ENCODE measurements at regions of chr5 and their contacts with region 1.

Region 1: DNA sequence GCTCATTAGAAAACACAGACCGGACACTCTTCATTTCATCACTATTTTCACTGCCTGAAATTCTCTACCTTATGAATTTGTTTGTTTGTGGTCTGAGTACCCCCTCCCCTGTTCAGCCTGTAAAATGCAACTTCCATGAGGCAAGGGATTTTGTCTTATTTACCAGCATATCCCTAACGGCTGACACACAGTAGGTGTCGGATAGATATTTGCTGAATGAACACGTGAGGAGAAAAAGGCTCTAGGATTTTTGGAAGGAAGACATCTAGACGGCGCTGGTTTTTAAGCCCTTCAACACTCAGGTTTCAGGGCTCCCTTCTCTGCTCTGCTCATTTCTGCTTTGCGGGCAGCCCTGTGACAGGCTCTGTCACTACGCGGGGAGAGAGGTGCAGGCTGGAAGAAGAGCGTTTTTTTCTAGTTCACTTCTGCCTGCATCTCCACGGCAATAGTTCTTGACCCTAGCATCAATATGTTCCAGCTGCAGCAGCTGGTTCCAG is 41.0 kb downstream of the KCNMB1 start:
- DNase-seq: no peak
- ATAC-seq: peak; percentile 23; the same call in 2 of the 3 replicates
- H3K4me3 ChIP-seq: no peak overlapping the region
- H3K27ac ChIP-seq: no peak overlapping the region
- H3K4me1 ChIP-seq: peaks cover 2% of the 10 kb centered on the region; the same call in 1 of the 2 replicates
- H3K27me3 ChIP-seq: peaks cover 1 to 15% of the 10 kb centered on the region in 2 experiments; a peak in 2 of 4 replicates
- CTCF ChIP-seq: peak in 1 of 3 experiments; percentile 21; a peak in 1 of 6 replicates
- EP300 ChIP-seq: no peak
- POLR2A ChIP-seq: no peak
- RAD21 ChIP-seq: peak; percentile 49

Region 2: GRCh38 chr5:169838688-169839087 is 509.5 kb before region 1 on chr5:
- CTCF ChIA-PET with region 1: no interaction called
- POLR2A ChIA-PET with region 1: no interaction called
- RAD21 ChIA-PET with region 1: no interaction called
- SMC1A ChIA-PET with region 1: no interaction called
- in situ Hi-C with region 1: no loop called
- intact Hi-C with region 1: no loop called
- DNase-seq: peak; percentile 45
- ATAC-seq: peak; percentile 92
- H3K4me3 ChIP-seq: no peak overlapping the region
- H3K27ac ChIP-seq: peak overlapping the region; percentile 76
- H3K4me1 ChIP-seq: peaks cover 28% of the 10 kb centered on the region
- H3K27me3 ChIP-seq: no peaks in the 10 kb centered on the region
- CTCF ChIP-seq: no peak
- EP300 ChIP-seq: no peak; a peak in 1 of 4 replicates
- POLR2A ChIP-seq: no peak
- RAD21 ChIP-seq: no peak

Region 3: DNA sequence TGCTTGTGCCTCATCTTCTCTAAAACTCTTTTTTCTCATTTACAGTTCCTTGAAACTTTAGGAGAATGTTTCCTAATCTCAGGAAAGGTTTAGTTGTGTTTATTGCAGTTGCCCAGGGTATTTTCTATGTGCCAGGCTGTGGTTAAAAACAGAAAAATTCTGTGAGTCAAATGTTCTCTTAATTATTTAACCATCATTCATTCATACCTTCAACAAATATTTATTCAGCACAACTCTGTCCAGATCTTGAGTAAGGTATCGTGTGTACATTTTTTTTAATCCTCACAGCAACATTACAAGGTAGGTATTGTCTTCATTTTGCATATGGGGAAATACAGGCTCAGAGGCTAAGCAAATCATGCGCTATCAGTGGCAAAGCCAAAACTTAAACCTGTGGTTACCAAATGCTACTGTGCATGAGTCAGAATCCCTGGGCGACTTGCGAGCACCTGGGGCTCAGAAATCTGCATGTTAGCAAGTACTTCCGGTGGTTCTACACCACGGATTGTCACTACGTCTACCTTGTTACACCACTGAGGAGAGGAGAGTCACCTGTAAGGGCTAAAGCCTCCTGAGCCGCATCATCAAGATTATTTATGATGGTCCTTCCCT is 94.2 kb before region 1 on chr5:
- CTCF ChIA-PET with region 1: no interaction called
- POLR2A ChIA-PET with region 1: no interaction called
- RAD21 ChIA-PET with region 1: no interaction called
- SMC1A ChIA-PET with region 1: no interaction called
- in situ Hi-C with region 1: no loop called
- intact Hi-C with region 1: no loop called
- DNase-seq: peak; percentile 49
- ATAC-seq: peak; percentile 94
- H3K4me3 ChIP-seq: no peak overlapping the region
- H3K27ac ChIP-seq: no peak overlapping the region
- H3K4me1 ChIP-seq: no peaks in the 10 kb centered on the region
- H3K27me3 ChIP-seq: no peaks in the 10 kb centered on the region
- CTCF ChIP-seq: no peak
- EP300 ChIP-seq: no peak
- POLR2A ChIP-seq: no peak
- RAD21 ChIP-seq: no peak

Region 4: GRCh38 chr5:170429014-170429413 is 80.8 kb after region 1 on chr5:
- CTCF ChIA-PET with region 1: interaction called, 10 read pairs
- POLR2A ChIA-PET with region 1: no interaction called
- RAD21 ChIA-PET with region 1: no interaction called
- SMC1A ChIA-PET with region 1: no interaction called
- in situ Hi-C with region 1: no loop called
- intact Hi-C with region 1: no loop called
- DNase-seq: no peak
- ATAC-seq: no peak
- H3K4me3 ChIP-seq: no peak overlapping the region
- H3K27ac ChIP-seq: no peak overlapping the region
- H3K4me1 ChIP-seq: no peaks in the 10 kb centered on the region
- H3K27me3 ChIP-seq: peaks cover 0 to 2% of the 10 kb centered on the region in 2 experiments; a peak in 2 of 4 replicates
- CTCF ChIP-seq: no peak
- EP300 ChIP-seq: no peak
- POLR2A ChIP-seq: no peak
- RAD21 ChIP-seq: no peak

Measured in GM12878 (cell line).